Posterior vena cava (tissue), 2 donors: ENCODE measurements at regions of chr12 and their contacts with region 1.

Region 1: DNA sequence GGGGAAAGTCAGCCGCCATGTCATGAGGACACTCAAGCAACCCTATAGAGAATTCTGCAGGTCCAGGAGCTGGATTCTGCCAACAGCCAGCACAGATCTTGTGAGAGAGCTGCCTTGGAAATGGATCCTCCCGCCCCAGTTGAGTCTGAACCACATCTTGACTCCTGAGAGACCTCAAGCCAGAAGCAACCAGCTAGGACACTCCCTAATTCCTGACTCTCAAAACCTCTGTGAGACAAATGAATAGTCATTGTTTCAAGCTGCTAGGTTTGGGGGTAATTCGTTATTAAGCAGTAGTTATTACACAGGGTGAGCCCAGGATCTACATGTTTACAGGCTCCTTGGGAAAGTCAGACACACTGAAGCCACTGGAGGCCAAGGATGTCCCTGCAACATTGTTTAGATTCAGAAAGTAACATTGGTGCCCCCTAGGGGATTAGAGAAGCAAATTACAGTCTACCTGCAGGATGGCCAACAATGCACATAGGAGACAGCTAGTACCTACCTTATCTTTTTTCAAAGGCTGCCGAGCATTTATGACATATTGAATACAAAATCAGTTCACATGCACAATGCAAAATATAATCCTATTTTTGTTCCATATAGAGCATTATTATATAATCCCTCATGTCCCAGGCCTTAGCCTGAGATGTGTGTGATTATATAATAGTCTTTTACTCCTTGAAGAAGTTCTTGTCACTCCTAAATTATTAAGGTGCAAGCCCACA is 57.9 kb upstream of the FICD start:
- DNase-seq: no peak

Region 2: GRCh38 chr12:108297895-108298760 is 159.0 kb before region 1 on chr12:
- intact Hi-C with region 1: loop called in 1 of 2 experiments (anchors 10 kb)
- DNase-seq: no peak

Region 3: DNA sequence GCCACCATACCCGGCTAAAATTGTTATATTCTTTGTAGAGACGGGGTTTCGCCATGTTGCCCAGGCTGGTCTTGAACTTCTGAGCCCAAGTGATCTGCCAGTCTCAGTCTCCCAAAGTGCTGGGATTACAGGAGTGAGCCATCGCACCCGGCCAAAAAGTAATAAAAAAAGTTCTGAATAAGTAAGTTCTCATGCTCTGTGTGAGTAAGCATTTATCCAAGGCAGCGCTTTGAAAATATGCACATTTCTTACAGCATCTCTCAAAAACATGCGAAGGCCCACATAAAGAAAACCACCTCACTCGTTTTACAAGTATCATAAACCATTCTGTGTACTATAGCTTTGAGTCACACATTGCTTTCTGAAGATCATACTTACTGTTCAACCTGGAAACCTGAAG is 1530.4 kb after region 1 on chr12:
- intact Hi-C with region 1: no loop called
- DNase-seq: no peak